ENCODE measurements at regions of chr20 and their contacts with region 1.

Region 1: GRCh38 chr20:1437235-1437904 is 29.3 kb downstream of the NSFL1C start:
- DNase-seq: peak; percentile 84
- H3K4me3 Mint-ChIP-seq: no peak overlapping the region
- H3K27ac Mint-ChIP-seq: no peak overlapping the region
- H3K4me1 Mint-ChIP-seq: peaks cover 31% of the 10 kb centered on the region
- H3K27me3 Mint-ChIP-seq: peaks cover 30% of the 10 kb centered on the region

Region 2: GRCh38 chr20:1313236-1313964 is 124.0 kb before region 1 on chr20:
- CTCF ChIA-PET with region 1: interaction called, 40 read pairs
- POLR2A ChIA-PET with region 1: interaction called, 3 read pairs
- DNase-seq: peak; percentile 61
- H3K4me3 Mint-ChIP-seq: no peak overlapping the region
- H3K27ac Mint-ChIP-seq: no peak overlapping the region
- H3K4me1 Mint-ChIP-seq: peaks cover 16% of the 10 kb centered on the region
- H3K27me3 Mint-ChIP-seq: peaks cover 2% of the 10 kb centered on the region

Region 3: GRCh38 chr20:1392823-1393506 is 44.4 kb before region 1 on chr20 and contains the start of gene FKBP1A:
- CTCF ChIA-PET with region 1: interaction called, 26 read pairs
- POLR2A ChIA-PET with region 1: interaction called, 4 read pairs
- DNase-seq: peak; percentile 93
- H3K4me3 Mint-ChIP-seq: peak within 1 kb of the TSS; percentile 84
- H3K27ac Mint-ChIP-seq: peak within 1 kb of the TSS; percentile 83
- H3K4me1 Mint-ChIP-seq: peaks cover 59% of the 10 kb centered on the region
- H3K27me3 Mint-ChIP-seq: peaks cover 25% of the 10 kb centered on the region
- total RNA-seq, gene FKBP1A: 205 to 207 TPM

Region 4: DNA sequence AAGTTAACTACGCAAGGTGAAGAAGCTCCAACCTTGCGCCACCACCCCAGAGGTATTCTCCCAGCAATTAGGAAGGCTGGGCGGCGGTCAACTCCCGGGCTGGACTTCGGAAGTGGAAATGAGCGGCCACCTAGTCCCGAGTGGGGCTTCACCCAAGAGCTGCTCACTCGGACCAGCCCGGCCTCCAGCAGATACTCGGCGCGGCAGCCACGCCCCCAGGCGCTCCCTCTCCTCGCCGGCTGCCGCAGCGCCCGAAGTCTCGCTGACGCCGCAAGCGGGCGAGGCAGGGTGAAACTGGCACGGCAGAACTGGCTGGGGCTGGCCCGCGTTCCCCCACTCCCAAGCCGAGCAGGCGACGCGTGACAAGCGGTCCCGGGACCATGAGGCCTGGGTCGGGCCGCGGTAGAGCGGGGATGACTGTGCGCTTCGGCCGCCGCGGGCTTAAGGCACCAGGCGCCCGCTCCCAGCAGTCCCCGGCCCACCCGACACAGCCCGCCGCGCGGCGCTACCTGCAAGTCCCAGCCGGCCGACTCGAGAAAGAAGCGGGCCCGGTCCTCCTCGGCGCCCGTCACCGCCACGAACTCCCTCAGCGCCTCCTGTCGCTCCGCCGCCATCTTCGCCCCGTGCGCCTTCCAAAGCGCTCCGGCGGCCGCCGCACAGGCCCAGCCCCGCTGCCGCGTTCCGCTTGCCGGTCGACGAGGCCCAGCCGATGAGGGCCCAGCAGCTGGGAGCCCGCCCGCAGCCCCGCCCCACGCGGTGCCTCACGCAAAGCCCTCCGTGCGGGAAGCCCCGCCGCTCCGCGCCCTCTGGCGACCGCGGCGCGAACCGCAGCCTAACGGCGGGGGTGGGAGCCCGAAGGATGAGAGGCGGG is 29.1 kb after region 1 on chr20 and contains the start of gene NSFL1C:
- CTCF ChIA-PET with region 1: interaction called, 15 read pairs
- POLR2A ChIA-PET with region 1: interaction called, 7 read pairs
- DNase-seq: peak; percentile 98
- H3K4me3 Mint-ChIP-seq: peak within 1 kb of the TSS; percentile 85
- H3K27ac Mint-ChIP-seq: peak within 1 kb of the TSS; percentile 68
- H3K4me1 Mint-ChIP-seq: peaks cover 43% of the 10 kb centered on the region
- H3K27me3 Mint-ChIP-seq: peaks cover 20% of the 10 kb centered on the region
- total RNA-seq, gene NSFL1C: 49.2 to 49.6 TPM

Region 5: GRCh38 chr20:1503564-1504227 is 66.3 kb after region 1 on chr20:
- CTCF ChIA-PET with region 1: interaction called, 12 read pairs
- POLR2A ChIA-PET with region 1: no interaction called
- DNase-seq: peak; percentile 77
- H3K4me3 Mint-ChIP-seq: no peak overlapping the region
- H3K27ac Mint-ChIP-seq: no peak overlapping the region
- H3K4me1 Mint-ChIP-seq: peaks cover 3% of the 10 kb centered on the region
- H3K27me3 Mint-ChIP-seq: peaks cover 58% of the 10 kb centered on the region

Measured in activated CD4-positive, alpha-beta memory T cell treated with anti-CD3 and anti-CD28 coated beads, Interleukin-2, amount 10 ng/mL, durations not matched to agents 7 days and 5 days (primary cell).